IMR-90 (cell line): ENCODE measurements at regions of chr12 and their contacts with region 1.

Region 1: GRCh38 chr12:34033628-34034282 is 11.5 kb downstream of the ALG10 start:
- DNase-seq: peak; percentile 42
- ATAC-seq: peak; percentile 40; the same call in 1 of the 2 replicates
- H3K4me3 ChIP-seq: no peak overlapping the region
- H3K27ac ChIP-seq: no peak overlapping the region
- H3K4me1 ChIP-seq: no peaks in the 10 kb centered on the region
- H3K27me3 ChIP-seq: no peaks in the 10 kb centered on the region
- CTCF ChIP-seq: peak; percentile 52
- POLR2A ChIP-seq: no peak
- RAD21 ChIP-seq: peak; percentile 33

Region 2: GRCh38 chr12:32788405-32788804 is 1245.3 kb before region 1 on chr12:
- CTCF ChIA-PET with region 1: no interaction called
- POLR2A ChIA-PET with region 1: interaction called, 21 read pairs
- dilution Hi-C with region 1: no loop called
- in situ Hi-C with region 1: no loop called
- intact Hi-C with region 1: no loop called
- DNase-seq: no peak
- ATAC-seq: no peak
- H3K4me3 ChIP-seq: no peak overlapping the region
- H3K27ac ChIP-seq: no peak overlapping the region
- H3K4me1 ChIP-seq: no peaks in the 10 kb centered on the region
- H3K27me3 ChIP-seq: no peaks in the 10 kb centered on the region
- CTCF ChIP-seq: no peak
- POLR2A ChIP-seq: no peak
- RAD21 ChIP-seq: no peak

Region 3: DNA sequence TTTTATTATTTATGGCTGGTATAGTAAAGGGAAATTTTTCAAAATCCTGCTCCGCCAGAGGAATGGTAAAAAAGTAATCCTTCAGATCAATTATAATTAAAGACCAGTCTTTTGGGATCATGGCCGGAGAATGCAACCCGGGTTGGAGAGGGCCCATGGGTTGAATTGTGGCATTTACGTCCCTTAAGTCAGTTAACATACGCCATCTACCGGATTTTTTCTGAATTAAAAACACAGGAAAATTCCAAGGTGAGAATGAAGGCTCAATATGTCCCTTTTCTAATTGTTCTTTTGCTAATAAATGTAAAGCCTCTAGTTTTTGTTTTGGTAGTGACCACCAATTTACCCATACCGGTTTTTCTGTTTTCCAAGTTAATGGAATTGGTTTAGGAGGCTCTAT is 591.4 kb after region 1 on chr12:
- CTCF ChIA-PET with region 1: no interaction called
- POLR2A ChIA-PET with region 1: no interaction called
- dilution Hi-C with region 1: no loop called
- in situ Hi-C with region 1: no loop called
- intact Hi-C with region 1: loop called (anchors 5 kb)
- DNase-seq: no peak
- ATAC-seq: no peak
- H3K4me3 ChIP-seq: no peak overlapping the region
- H3K27ac ChIP-seq: no peak overlapping the region
- H3K4me1 ChIP-seq: no peaks in the 10 kb centered on the region
- H3K27me3 ChIP-seq: no peaks in the 10 kb centered on the region
- CTCF ChIP-seq: no peak
- POLR2A ChIP-seq: no peak
- RAD21 ChIP-seq: no peak